Caco-2 (cell line): ENCODE measurements at regions of chr16 and their contacts with region 1.

Region 1: GRCh38 chr16:77289331-77289809 is 90.2 kb downstream of the SYCE1L start:
- DNase-seq: peak; percentile 93 to 94
- H3K4me3 ChIP-seq: no peak overlapping the region
- H3K4me3 Mint-ChIP-seq: peak overlapping the region; percentile 70
- H3K27ac Mint-ChIP-seq: peak overlapping the region; percentile 97
- H3K4me1 ChIP-seq: peaks cover 40% of the 10 kb centered on the region
- H3K4me1 Mint-ChIP-seq: peaks cover 66% of the 10 kb centered on the region
- H3K27me3 ChIP-seq: no peaks in the 10 kb centered on the region
- H3K27me3 Mint-ChIP-seq: no peaks in the 10 kb centered on the region
- CTCF ChIP-seq: no peak

Region 2: DNA sequence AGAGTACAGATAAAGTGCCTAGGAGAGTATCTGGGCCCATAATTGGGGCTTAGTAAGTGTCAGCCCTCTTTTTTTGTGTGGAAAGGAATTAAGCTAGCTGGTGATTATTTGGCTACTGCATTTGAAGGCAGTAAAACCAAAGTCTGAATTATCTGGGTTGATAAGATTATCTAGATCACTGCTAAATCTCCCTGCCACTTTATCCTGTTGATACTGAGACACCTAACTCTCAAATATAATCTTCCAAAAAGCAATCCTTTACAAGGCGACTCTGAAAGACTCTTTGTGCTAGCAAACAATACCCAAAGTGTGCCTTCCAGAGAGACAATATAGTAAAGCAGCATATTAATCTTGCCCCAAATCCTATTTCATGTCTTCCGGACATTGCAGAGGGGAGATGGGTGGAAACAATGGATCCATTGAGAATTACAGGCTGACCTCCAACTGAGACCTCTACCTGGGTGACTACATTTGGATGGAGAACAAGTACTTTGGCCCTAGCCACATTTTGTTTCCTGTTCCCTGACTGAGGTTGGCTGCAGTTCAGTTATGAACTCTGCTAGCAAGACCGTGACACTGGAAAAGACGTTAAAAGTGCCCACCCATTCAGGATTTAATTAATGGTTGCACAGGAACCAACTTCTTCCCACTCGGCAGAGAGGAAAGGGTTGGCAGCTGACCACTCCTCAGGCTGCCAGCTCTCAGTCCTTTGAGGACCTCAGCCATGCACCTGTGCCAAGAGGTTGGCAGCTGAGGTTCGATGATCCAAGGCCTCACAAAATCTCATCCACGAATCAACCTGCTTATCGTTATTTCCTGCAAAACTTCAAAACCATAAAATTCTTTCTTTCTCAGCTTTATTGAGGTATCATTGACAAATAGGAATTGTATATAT is 17.6 kb before region 1 on chr16:
- CTCF ChIA-PET with region 1: no interaction called
- POLR2A ChIA-PET with region 1: interaction called, 6 read pairs
- intact Hi-C with region 1: loop called (anchors 1 kb)
- DNase-seq: peak in 1 of 2 experiments; percentile 18
- H3K4me3 ChIP-seq: no peak overlapping the region
- H3K4me3 Mint-ChIP-seq: no peak overlapping the region
- H3K27ac Mint-ChIP-seq: peak overlapping the region; percentile 30
- H3K4me1 ChIP-seq: peaks cover 18% of the 10 kb centered on the region
- H3K4me1 Mint-ChIP-seq: peaks cover 18% of the 10 kb centered on the region
- H3K27me3 ChIP-seq: no peaks in the 10 kb centered on the region
- H3K27me3 Mint-ChIP-seq: no peaks in the 10 kb centered on the region
- CTCF ChIP-seq: no peak

Region 3: DNA sequence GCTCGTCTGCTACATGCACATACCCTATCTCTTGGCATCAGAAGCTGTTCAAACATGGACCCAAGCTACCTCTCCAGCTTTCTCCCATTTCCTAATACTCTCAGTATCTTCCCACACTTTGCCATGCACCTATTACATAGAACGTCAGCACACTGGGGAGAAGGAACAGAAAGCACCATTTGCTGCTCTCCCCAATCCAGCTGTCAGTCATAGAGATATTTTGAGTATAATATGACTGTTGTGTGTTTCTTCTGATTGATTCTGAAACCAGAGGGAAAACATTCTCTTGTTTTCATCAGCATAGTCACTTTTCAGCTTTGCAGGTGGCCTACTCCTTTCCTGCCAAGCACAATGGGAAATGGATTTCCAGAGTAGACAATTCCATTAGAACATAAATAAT is 38.3 kb after region 1 on chr16:
- CTCF ChIA-PET with region 1: no interaction called
- POLR2A ChIA-PET with region 1: no interaction called
- intact Hi-C with region 1: no loop called
- DNase-seq: no peak
- H3K4me3 ChIP-seq: no peak overlapping the region
- H3K4me3 Mint-ChIP-seq: no peak overlapping the region
- H3K27ac Mint-ChIP-seq: no peak overlapping the region
- H3K4me1 ChIP-seq: no peaks in the 10 kb centered on the region
- H3K4me1 Mint-ChIP-seq: no peaks in the 10 kb centered on the region
- H3K27me3 ChIP-seq: no peaks in the 10 kb centered on the region
- H3K27me3 Mint-ChIP-seq: no peaks in the 10 kb centered on the region
- CTCF ChIP-seq: no peak

Region 4: GRCh38 chr16:77353587-77354263 is 64.4 kb after region 1 on chr16:
- CTCF ChIA-PET with region 1: no interaction called
- POLR2A ChIA-PET with region 1: no interaction called
- intact Hi-C with region 1: loop called (anchors 2 kb)
- DNase-seq: peak; percentile 54 to 61
- H3K4me3 ChIP-seq: no peak overlapping the region
- H3K4me3 Mint-ChIP-seq: no peak overlapping the region
- H3K27ac Mint-ChIP-seq: no peak overlapping the region
- H3K4me1 ChIP-seq: peaks cover 42% of the 10 kb centered on the region
- H3K4me1 Mint-ChIP-seq: peaks cover 29% of the 10 kb centered on the region
- H3K27me3 ChIP-seq: no peaks in the 10 kb centered on the region
- H3K27me3 Mint-ChIP-seq: no peaks in the 10 kb centered on the region
- CTCF ChIP-seq: no peak